ENCODE measurements at regions of chr3 and their contacts with region 1.

Region 1: DNA sequence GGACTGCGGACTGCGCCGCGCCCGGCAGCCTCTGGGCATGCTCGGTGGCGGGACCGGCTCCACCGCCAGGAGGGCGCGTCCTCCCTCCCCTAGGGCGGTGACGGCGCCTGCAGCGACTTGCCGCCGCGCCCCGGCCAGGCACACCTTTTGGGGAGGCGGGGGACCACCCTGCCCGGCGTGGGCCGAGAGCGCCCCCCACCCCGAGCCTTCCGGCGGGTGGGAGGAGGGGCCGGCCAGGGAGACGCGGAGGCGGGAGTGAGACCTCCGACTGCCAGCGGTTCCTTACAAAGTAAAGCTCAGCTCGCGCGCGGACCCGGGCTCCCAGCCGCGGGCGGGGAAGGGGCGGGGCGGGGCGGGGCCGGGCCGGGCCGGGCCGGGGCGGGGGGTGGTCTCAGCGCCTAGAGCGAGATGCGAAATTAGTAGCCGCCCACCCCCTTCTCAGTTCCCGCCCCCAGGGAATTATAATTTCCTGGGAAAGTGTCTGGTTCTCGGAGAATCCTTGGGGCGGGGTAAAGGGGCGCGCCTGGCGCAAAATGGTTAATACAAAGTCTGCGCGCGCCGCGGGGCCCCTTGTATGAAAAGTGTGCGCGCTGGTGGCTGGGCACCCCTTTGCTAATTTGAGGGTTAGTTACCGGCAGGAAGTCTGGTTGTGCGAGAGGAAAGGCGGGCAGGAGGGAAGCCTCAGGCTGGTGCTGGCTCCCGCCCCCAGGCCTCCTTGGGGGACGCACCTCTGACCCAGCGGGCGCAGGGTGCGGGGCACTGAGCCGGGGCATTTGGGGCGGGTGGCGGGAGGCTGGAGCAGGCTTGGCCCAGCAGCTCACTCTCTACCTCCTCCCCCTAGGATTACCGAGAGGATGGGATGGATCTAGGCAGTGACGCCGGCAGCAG is 224.8 kb upstream of the IL12A start:
- DNase-seq: peak in 9 of 10 donors; percentile 50 to 84 (median 70)
- H3K4me3 ChIP-seq: peak overlapping the region; percentile 64 to 90 (median 81)
- H3K27ac ChIP-seq: peak overlapping the region; percentile 77 to 99 (median 94)
- H3K27me3 ChIP-seq: no peaks in the 10 kb centered on the region
- CTCF ChIP-seq: peak in 43 of 56 donors; percentile 9 to 55 (median 37)

Region 2: GRCh38 chr3:159616212-159616825 is 147.5 kb before region 1 on chr3:
- intact Hi-C with region 1: loop called (anchors 5 to 10 kb)
- DNase-seq: peak in 6 of 10 donors; percentile 21 to 51 (median 34)
- H3K4me3 ChIP-seq: no peak overlapping the region
- H3K27ac ChIP-seq: no peak overlapping the region
- H3K27me3 ChIP-seq: no peaks in the 10 kb centered on the region
- CTCF ChIP-seq: peak in 55 of 56 donors; percentile 17 to 72 (median 54)

Region 3: GRCh38 chr3:159804726-159805410 is 41.0 kb after region 1 on chr3:
- intact Hi-C with region 1: loop called (anchors 2 to 5 kb)
- DNase-seq: peak in 9 of 10 donors; percentile 65 to 89 (median 81)
- H3K4me3 ChIP-seq: peak overlapping the region in 3 of 59 donors; percentile 5 to 10 (median 6)
- H3K27ac ChIP-seq: peak overlapping the region in 53 of 59 donors; percentile 6 to 98 (median 64)
- H3K27me3 ChIP-seq: no peaks in the 10 kb centered on the region
- CTCF ChIP-seq: peak; percentile 67 to 96 (median 90)

Region 4: DNA sequence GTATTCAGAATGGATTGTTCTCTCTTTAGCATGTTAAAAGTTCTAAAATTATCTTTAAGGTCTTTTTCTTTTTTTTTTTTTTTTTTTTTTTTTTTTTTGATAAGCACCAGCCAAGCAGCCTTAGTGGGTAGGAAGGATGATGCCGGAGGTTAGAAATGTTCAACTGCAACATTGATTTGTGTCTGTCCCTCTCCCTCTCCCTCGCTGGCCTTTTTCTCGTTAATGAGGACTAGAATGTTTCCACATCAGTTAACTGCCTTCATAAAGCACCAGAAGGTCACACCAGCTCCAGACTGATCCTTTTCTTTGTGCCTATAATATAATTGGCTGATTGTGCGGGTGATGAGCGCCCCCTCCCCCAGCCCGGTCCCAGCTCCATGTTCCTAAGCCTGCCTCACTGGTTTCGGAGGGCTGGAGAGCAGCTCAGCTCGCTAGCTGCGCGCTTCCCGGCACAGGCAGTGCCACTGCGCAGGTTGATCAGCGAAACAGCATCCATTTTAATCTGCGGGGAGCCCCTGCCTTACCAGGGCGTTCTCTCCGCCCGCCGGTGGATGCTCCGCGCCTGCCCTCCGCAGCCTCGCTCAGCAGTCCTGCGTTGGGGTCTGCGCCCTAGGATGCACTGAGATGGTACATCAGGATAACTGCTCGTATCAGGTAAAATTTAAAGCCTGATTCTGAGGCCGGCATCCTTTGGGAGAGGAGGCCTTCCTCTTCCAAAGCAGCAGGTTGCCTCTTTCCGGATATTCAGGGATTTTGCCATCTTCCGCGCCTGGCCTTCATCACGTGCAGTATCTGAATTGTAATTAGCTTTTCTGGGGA is 75.9 kb after region 1 on chr3:
- intact Hi-C with region 1: loop called in 1 of 2 experiments (anchors 10 kb)
- DNase-seq: peak; percentile 79 to 93 (median 89)
- H3K4me3 ChIP-seq: peak within 1 kb of the TSS; percentile 57 to 93 (median 75)
- H3K27ac ChIP-seq: peak within 1 kb of the TSS; percentile 67 to 100 (median 98)
- H3K27me3 ChIP-seq: no peaks in the 10 kb centered on the region
- CTCF ChIP-seq: peak in 30 of 56 donors; percentile 5 to 53 (median 16)

Region 5: DNA sequence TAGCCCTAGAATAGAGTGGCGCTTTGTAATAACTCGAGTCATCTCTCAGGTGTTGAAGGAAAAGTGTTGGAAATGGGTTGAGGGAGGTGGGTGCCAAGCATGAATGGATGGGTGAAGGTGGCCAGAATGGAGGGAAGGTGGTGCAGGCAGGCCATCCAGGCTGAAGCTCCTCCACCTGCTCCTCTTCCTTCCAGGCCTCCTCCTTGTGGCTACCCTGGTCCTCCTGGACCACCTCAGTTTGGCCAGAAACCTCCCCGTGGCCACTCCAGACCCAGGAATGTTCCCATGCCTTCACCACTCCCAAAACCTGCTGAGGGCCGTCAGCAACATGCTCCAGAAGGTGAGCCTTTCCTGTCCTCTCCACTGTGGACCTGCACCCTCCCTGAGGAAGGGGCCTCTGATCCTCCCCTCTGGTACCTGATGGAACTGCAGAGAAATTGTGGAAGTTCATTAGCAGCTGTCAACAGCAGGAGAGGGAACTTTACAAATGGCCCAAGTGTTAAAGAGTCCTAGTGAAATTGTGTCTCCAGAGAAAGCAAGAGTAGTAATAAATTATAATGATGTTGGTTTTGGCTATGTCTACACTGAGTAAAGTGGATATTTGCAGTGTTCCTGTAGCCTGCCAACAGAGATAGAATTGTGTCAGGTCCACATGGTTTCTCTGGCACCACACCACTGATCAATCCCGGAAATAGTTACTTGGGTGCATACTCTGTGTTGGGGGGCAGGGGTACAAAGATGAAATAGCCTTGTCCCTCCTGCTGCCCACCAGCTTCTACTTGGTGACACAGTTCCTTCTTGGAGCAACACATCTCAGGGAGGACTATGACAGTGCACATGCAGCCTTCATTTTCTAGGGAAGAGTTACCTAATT is 226.4 kb after region 1 on chr3:
- intact Hi-C with region 1: no loop called
- DNase-seq: no peak
- H3K4me3 ChIP-seq: peak overlapping the region in 9 of 59 donors; percentile 72 to 84 (median 82)
- H3K27ac ChIP-seq: peak overlapping the region in 6 of 59 donors; percentile 5 to 50 (median 16)
- H3K27me3 ChIP-seq: no peaks in the 10 kb centered on the region
- CTCF ChIP-seq: peak in 1 of 56 donors; percentile 22